ENCODE measurements at regions of chr13 and their contacts with region 1.

Region 1: GRCh38 chr13:110715395-110716235 is 2.1 kb downstream of the ING1 start:
- DNase-seq: peak; percentile 99
- H3K4me3 ChIP-seq: peak overlapping the region; percentile 92 to 98
- H3K27ac ChIP-seq: peak overlapping the region; percentile 99
- H3K4me1 ChIP-seq: peaks cover 0 to 34% (median 27%) of the 10 kb centered on the region in 4 donors
- H3K27me3 ChIP-seq: no peaks in the 10 kb centered on the region
- CTCF ChIP-seq: no peak

Region 2: DNA sequence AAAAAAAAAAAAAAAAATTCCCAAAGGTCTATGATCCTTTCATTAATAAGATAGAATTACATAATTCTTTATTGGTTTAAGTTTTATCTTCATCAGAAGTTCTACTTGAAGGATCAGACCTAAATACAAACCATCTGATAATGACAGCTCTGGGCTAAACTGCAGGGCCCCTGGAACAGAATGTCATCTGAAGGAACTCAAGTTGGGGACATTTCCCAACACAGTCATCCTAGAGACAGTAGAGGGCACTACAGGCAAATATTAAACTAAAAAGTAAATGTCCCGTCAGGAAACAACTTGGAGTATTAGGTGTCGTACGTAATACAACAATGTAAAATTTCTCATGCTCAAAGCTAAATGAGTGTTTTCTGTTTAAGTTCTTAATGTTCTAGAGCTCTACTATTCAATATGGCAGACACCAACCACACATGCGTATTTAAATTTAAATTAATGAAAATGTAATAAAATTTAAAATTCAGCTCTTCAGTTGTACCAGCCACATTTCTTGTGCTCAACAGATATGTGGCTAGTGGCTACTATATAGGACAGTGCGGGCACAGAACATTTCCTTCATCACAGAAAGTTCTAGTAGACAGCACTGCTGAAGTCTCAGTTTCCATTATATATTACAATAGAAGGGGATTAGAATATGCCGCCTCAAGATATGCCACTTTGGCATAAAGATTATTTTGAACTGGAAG is 122.0 kb before region 1 on chr13:
- intact Hi-C with region 1: no loop called
- DNase-seq: no peak
- H3K4me3 ChIP-seq: no peak overlapping the region
- H3K27ac ChIP-seq: no peak overlapping the region
- H3K4me1 ChIP-seq: no peaks in the 10 kb centered on the region
- H3K27me3 ChIP-seq: no peaks in the 10 kb centered on the region
- CTCF ChIP-seq: peak; percentile 61 to 69

Region 3: GRCh38 chr13:110874508-110874960 is 158.9 kb after region 1 on chr13:
- intact Hi-C with region 1: loop called (anchors 10 kb)
- DNase-seq: peak; percentile 86 to 94
- H3K4me3 ChIP-seq: peak overlapping the region; percentile 44 to 53
- H3K27ac ChIP-seq: peak overlapping the region; percentile 33 to 47
- H3K4me1 ChIP-seq: peaks cover 0 to 33% (median 26%) of the 10 kb centered on the region in 4 donors
- H3K27me3 ChIP-seq: no peaks in the 10 kb centered on the region
- CTCF ChIP-seq: no peak